ENCODE measurements at regions of chr9 and their contacts with region 1.

Region 1: GRCh38 chr9:33167046-33167808 is at the start of gene B4GALT1:
- DNase-seq: peak; percentile 81 to 97 (median 90)
- ATAC-seq: peak; percentile 86
- H3K4me3 ChIP-seq: peak within 1 kb of the TSS; percentile 68
- H3K4me3 Mint-ChIP-seq: peak within 1 kb of the TSS; percentile 87 to 97 (median 95)
- H3K27ac ChIP-seq: peak within 1 kb of the TSS; percentile 91
- H3K27ac Mint-ChIP-seq: peak within 1 kb of the TSS; percentile 91 to 100 (median 99)
- H3K4me1 ChIP-seq: peaks cover 43 to 45% of the 10 kb centered on the region in 2 donors
- H3K4me1 Mint-ChIP-seq: peaks cover 47 to 69% (median 64%) of the 10 kb centered on the region in 7 donors
- H3K27me3 ChIP-seq: no peaks in the 10 kb centered on the region
- H3K27me3 Mint-ChIP-seq: no peaks in the 10 kb centered on the region
- total RNA-seq, gene B4GALT1: 40.7 to 86.2 (median 45.6) TPM

Region 2: GRCh38 chr9:32384364-32385151 is 782.7 kb before region 1 on chr9 and contains the start of gene ACO1:
- CTCF ChIA-PET with region 1: no interaction called
- POLR2A ChIA-PET with region 1: no interaction called
- intact Hi-C with region 1: loop called in 1 of 2 experiments (anchors 10 kb)
- DNase-seq: peak; percentile 74 to 91 (median 83)
- ATAC-seq: peak; percentile 99
- H3K4me3 ChIP-seq: peak within 1 kb of the TSS; percentile 58
- H3K4me3 Mint-ChIP-seq: peak within 1 kb of the TSS; percentile 84 to 92 (median 88)
- H3K27ac ChIP-seq: peak within 1 kb of the TSS; percentile 70
- H3K27ac Mint-ChIP-seq: peak within 1 kb of the TSS in 8 of 9 donors; percentile 10 to 82 (median 58)
- H3K4me1 ChIP-seq: peaks cover 5 to 12% of the 10 kb centered on the region in 2 donors
- H3K4me1 Mint-ChIP-seq: peaks cover 13 to 29% (median 22%) of the 10 kb centered on the region in 7 donors
- H3K27me3 ChIP-seq: no peaks in the 10 kb centered on the region
- H3K27me3 Mint-ChIP-seq: peaks cover 0 to 31% (median 8%) of the 10 kb centered on the region in 5 donors
- total RNA-seq, gene ACO1: 4.7 to 10.5 (median 7.4) TPM

Region 3: DNA sequence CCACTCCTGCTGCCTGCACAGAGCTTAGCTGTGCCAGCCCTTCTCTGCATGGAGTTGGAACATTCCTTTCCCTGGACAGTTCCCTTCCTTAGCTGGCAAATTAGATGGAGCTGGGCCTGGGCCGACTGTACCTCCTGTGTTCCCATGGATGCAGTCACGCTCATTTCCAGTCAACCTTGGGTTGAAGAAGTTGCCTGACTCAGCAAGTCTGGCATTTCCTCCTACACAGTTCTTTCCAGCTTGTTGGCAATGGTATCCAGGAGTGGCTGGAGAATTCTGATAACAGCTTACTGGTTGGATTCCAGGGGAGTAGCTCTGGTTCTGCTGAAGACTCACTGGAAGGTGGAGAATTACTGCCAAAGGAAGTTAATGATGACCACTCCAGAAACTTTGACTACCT is 522.5 kb before region 1 on chr9:
- CTCF ChIA-PET with region 1: no interaction called
- POLR2A ChIA-PET with region 1: no interaction called
- intact Hi-C with region 1: no loop called
- DNase-seq: no peak
- ATAC-seq: no peak
- H3K4me3 ChIP-seq: no peak overlapping the region
- H3K4me3 Mint-ChIP-seq: no peak overlapping the region
- H3K27ac ChIP-seq: no peak overlapping the region
- H3K27ac Mint-ChIP-seq: no peak overlapping the region
- H3K4me1 ChIP-seq: no peaks in the 10 kb centered on the region
- H3K4me1 Mint-ChIP-seq: no peaks in the 10 kb centered on the region
- H3K27me3 ChIP-seq: no peaks in the 10 kb centered on the region
- H3K27me3 Mint-ChIP-seq: peaks cover 4 to 57% (median 46%) of the 10 kb centered on the region in 5 donors

Region 4: DNA sequence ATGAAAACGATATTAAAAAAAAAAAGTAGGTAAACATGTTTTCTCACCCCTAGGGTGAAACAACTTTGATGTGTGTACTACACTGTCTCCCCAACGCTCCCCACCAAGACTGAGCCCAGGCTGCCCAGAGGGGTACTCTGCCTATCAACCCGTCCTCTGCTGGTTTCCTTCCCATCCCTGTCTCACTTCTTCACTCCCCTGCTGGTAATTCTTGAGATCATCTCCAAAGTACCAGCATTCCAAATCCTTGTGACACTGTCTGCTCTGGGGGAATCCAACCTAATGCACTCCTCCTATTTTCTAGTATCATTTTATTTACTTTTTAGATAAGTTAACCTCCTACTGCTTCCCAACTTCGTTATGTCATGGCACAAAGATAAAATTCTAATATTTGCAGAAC is 159.5 kb before region 1 on chr9:
- CTCF ChIA-PET with region 1: no interaction called
- POLR2A ChIA-PET with region 1: no interaction called
- intact Hi-C with region 1: loop called in 1 of 2 experiments (anchors 5 kb)
- DNase-seq: no peak
- ATAC-seq: no peak
- H3K4me3 ChIP-seq: no peak overlapping the region
- H3K4me3 Mint-ChIP-seq: no peak overlapping the region
- H3K27ac ChIP-seq: no peak overlapping the region
- H3K27ac Mint-ChIP-seq: peak overlapping the region in 1 of 9 donors; percentile 37
- H3K4me1 ChIP-seq: no peaks in the 10 kb centered on the region
- H3K4me1 Mint-ChIP-seq: peaks cover 0 to 12% (median under 1%) of the 10 kb centered on the region in 7 donors
- H3K27me3 ChIP-seq: no peaks in the 10 kb centered on the region
- H3K27me3 Mint-ChIP-seq: no peaks in the 10 kb centered on the region

Region 5: GRCh38 chr9:33106827-33107621 is 60.2 kb before region 1 on chr9:
- CTCF ChIA-PET with region 1: interaction called, 3 read pairs
- POLR2A ChIA-PET with region 1: no interaction called
- intact Hi-C with region 1: loop called in 1 of 2 experiments (anchors 2 kb)
- DNase-seq: no peak
- ATAC-seq: no peak
- H3K4me3 ChIP-seq: no peak overlapping the region
- H3K4me3 Mint-ChIP-seq: no peak overlapping the region
- H3K27ac ChIP-seq: no peak overlapping the region
- H3K27ac Mint-ChIP-seq: peak overlapping the region in 1 of 9 donors; percentile 55
- H3K4me1 ChIP-seq: no peaks in the 10 kb centered on the region
- H3K4me1 Mint-ChIP-seq: peaks cover 0 to 15% (median 0%) of the 10 kb centered on the region in 7 donors
- H3K27me3 ChIP-seq: no peaks in the 10 kb centered on the region
- H3K27me3 Mint-ChIP-seq: no peaks in the 10 kb centered on the region

Region 6: GRCh38 chr9:33151007-33151557 is 16.1 kb before region 1 on chr9:
- CTCF ChIA-PET with region 1: interaction called, 5 read pairs
- POLR2A ChIA-PET with region 1: interaction called, 92 read pairs
- intact Hi-C with region 1: loop called in 1 of 2 experiments (anchors 2 kb)
- DNase-seq: no peak
- ATAC-seq: peak; percentile 61
- H3K4me3 ChIP-seq: no peak overlapping the region
- H3K4me3 Mint-ChIP-seq: peak overlapping the region in 3 of 10 donors; percentile 5 to 20 (median 18)
- H3K27ac ChIP-seq: no peak overlapping the region
- H3K27ac Mint-ChIP-seq: peak overlapping the region in 5 of 9 donors; percentile 39 to 92 (median 49)
- H3K4me1 ChIP-seq: peaks cover 36 to 44% of the 10 kb centered on the region in 2 donors
- H3K4me1 Mint-ChIP-seq: peaks cover 57 to 91% (median 88%) of the 10 kb centered on the region in 7 donors
- H3K27me3 ChIP-seq: no peaks in the 10 kb centered on the region
- H3K27me3 Mint-ChIP-seq: no peaks in the 10 kb centered on the region

Region 7: GRCh38 chr9:33473643-33474352 is 306.6 kb after region 1 on chr9 and contains the start of gene NOL6:
- CTCF ChIA-PET with region 1: interaction called, 5 read pairs
- POLR2A ChIA-PET with region 1: no interaction called
- intact Hi-C with region 1: loop called (anchors 5 to 10 kb)
- DNase-seq: peak; percentile 91 to 99 (median 98)
- ATAC-seq: peak; percentile 100
- H3K4me3 ChIP-seq: peak within 1 kb of the TSS; percentile 88
- H3K4me3 Mint-ChIP-seq: peak within 1 kb of the TSS; percentile 88 to 100 (median 97)
- H3K27ac ChIP-seq: peak within 1 kb of the TSS; percentile 78
- H3K27ac Mint-ChIP-seq: peak within 1 kb of the TSS; percentile 88 to 99 (median 96)
- H3K4me1 ChIP-seq: peaks cover 13 to 19% of the 10 kb centered on the region in 2 donors
- H3K4me1 Mint-ChIP-seq: peaks cover 9 to 38% (median 31%) of the 10 kb centered on the region in 7 donors
- H3K27me3 ChIP-seq: no peaks in the 10 kb centered on the region
- H3K27me3 Mint-ChIP-seq: no peaks in the 10 kb centered on the region
- total RNA-seq, gene NOL6: 34.0 to 48.0 (median 44.0) TPM

Region 8: GRCh38 chr9:33737811-33738606 is 570.8 kb after region 1 on chr9:
- CTCF ChIA-PET with region 1: no interaction called
- POLR2A ChIA-PET with region 1: no interaction called
- intact Hi-C with region 1: no loop called
- DNase-seq: no peak
- ATAC-seq: peak; percentile 47
- H3K4me3 ChIP-seq: no peak overlapping the region
- H3K4me3 Mint-ChIP-seq: no peak overlapping the region
- H3K27ac ChIP-seq: no peak overlapping the region
- H3K27ac Mint-ChIP-seq: no peak overlapping the region
- H3K4me1 ChIP-seq: no peaks in the 10 kb centered on the region
- H3K4me1 Mint-ChIP-seq: peaks cover 0 to 3% (median 0%) of the 10 kb centered on the region in 7 donors
- H3K27me3 ChIP-seq: no peaks in the 10 kb centered on the region
- H3K27me3 Mint-ChIP-seq: peaks cover 25 to 45% (median 35%) of the 10 kb centered on the region in 5 donors